CD4-positive, alpha-beta T cell (primary cell): ENCODE measurements at regions of chr20 and their contacts with region 1.

Region 1: DNA sequence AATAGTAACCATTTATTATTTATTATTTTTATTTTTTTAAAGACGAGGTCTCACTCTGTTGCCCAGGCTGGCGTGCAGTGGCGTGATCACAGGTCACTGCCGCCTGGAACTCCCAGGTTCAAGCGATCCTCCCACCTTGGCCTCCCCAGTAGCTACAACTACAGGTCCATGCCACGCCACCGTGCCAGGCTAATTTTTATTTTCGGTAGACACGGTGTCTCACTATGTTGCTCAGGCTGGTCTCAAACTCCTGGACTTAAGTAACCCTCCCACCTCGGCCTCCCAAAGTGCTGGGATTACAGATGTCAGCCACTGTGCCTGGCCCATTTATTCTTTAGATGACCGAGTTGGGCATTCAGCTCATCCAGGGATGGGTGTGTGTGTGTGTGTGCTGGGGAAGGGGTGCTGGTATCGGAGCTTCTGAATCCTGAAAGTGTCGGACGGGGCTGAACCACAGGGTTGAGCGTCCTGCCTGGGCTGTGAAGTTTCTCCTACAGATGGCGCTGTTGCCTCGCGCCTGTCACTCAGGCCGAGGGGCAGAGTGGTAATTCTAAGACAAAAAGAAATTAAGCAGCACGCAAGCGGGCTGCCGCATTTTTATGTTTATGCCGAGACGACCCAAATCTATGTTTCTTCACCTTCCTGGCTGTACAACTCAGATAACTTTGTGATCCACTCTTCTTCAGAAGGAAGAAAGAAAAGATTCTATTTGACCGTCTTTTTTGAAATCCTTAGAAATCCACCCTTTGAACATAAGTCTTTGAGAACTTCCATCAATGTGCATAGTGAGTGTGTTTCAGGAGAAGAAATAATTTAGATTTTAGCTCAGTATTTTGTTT is 252.8 kb downstream of the CDH26 start:
- DNase-seq: peak; percentile 20 to 74 (median 36)
- ATAC-seq: no peak
- H3K4me3 ChIP-seq: no peak overlapping the region
- H3K4me3 Mint-ChIP-seq: no peak overlapping the region
- H3K27ac ChIP-seq: no peak overlapping the region
- H3K27ac Mint-ChIP-seq: no peak overlapping the region
- H3K4me1 ChIP-seq: peaks cover 4% of the 10 kb centered on the region
- H3K4me1 Mint-ChIP-seq: peaks cover 5% of the 10 kb centered on the region
- H3K27me3 ChIP-seq: no peaks in the 10 kb centered on the region
- H3K27me3 Mint-ChIP-seq: no peaks in the 10 kb centered on the region
- CTCF ChIP-seq: peak; percentile 70

Region 2: DNA sequence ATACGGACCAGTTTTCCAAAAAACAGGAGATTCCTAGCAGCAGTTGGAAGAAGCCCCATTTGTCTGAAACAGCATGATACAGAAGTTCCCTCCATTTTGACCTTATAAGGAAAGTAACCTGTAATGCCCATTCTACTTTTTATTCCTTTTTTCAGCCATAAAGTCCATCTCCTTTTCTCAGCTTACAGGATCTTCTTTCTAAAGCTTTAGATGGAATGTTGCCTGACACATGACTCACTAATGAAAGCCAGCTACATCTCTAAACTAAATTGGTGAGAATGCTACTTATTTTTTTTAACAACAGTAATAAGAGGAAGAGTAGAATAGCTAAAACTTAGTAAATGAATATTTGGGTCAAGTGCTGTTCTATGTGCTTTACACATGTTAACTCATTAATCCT is 18.7 kb before region 1 on chr20:
- CTCF ChIA-PET with region 1: no interaction called
- POLR2A ChIA-PET with region 1: no interaction called
- intact Hi-C with region 1: no loop called
- DNase-seq: no peak
- ATAC-seq: no peak
- H3K4me3 ChIP-seq: no peak overlapping the region
- H3K4me3 Mint-ChIP-seq: no peak overlapping the region
- H3K27ac ChIP-seq: no peak overlapping the region
- H3K27ac Mint-ChIP-seq: no peak overlapping the region
- H3K4me1 ChIP-seq: no peaks in the 10 kb centered on the region
- H3K4me1 Mint-ChIP-seq: no peaks in the 10 kb centered on the region
- H3K27me3 ChIP-seq: no peaks in the 10 kb centered on the region
- H3K27me3 Mint-ChIP-seq: no peaks in the 10 kb centered on the region
- CTCF ChIP-seq: no peak

Region 3: GRCh38 chr20:60262967-60263603 is 52.1 kb after region 1 on chr20:
- CTCF ChIA-PET with region 1: interaction called, 4 read pairs
- POLR2A ChIA-PET with region 1: no interaction called
- intact Hi-C with region 1: loop called in 1 of 2 experiments (anchors 2 kb)
- DNase-seq: peak; percentile 22 to 74 (median 42)
- ATAC-seq: peak; percentile 52
- H3K4me3 ChIP-seq: no peak overlapping the region
- H3K4me3 Mint-ChIP-seq: no peak overlapping the region
- H3K27ac ChIP-seq: no peak overlapping the region
- H3K27ac Mint-ChIP-seq: no peak overlapping the region
- H3K4me1 ChIP-seq: peaks cover 8% of the 10 kb centered on the region
- H3K4me1 Mint-ChIP-seq: peaks cover 29% of the 10 kb centered on the region
- H3K27me3 ChIP-seq: no peaks in the 10 kb centered on the region
- H3K27me3 Mint-ChIP-seq: no peaks in the 10 kb centered on the region
- CTCF ChIP-seq: peak; percentile 77

Region 4: DNA sequence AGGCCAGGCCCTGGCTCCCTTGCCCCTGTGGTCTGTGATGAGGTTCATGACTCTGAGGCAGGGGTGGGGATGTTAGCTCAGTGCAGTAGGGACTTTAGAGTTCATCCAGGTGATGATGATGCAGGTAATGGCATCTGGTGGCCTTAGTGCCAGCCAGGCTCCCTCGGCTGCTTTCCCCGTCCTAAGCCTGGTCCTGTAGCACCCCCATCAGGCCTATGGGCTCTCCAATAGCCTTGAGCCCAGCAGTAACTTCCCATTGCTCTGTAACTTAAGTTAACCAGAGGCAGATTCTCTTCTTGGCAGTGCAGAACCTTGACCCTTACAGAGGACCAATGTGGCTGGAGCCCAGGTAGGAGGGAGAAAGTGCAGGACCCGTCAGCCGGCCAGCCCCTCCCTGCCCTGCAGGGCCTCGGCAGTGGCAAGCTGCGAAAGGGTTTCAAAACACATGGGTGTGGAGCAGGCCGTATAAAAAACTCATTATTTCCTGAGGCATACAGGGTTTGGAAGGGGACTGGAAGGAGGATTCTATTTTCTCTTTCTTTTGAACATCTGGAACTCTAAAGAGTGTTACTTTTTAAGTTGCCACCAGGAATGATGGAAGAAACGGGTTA is 154.2 kb after region 1 on chr20:
- CTCF ChIA-PET with region 1: no interaction called
- POLR2A ChIA-PET with region 1: interaction called, 3 read pairs
- intact Hi-C with region 1: loop called in 1 of 2 experiments (anchors 10 kb)
- DNase-seq: peak in 1 of 14 experiments; percentile 5
- ATAC-seq: no peak
- H3K4me3 ChIP-seq: no peak overlapping the region
- H3K4me3 Mint-ChIP-seq: no peak overlapping the region
- H3K27ac ChIP-seq: no peak overlapping the region
- H3K27ac Mint-ChIP-seq: no peak overlapping the region
- H3K4me1 ChIP-seq: no peaks in the 10 kb centered on the region
- H3K4me1 Mint-ChIP-seq: no peaks in the 10 kb centered on the region
- H3K27me3 ChIP-seq: no peaks in the 10 kb centered on the region
- H3K27me3 Mint-ChIP-seq: no peaks in the 10 kb centered on the region
- CTCF ChIP-seq: no peak

Region 5: DNA sequence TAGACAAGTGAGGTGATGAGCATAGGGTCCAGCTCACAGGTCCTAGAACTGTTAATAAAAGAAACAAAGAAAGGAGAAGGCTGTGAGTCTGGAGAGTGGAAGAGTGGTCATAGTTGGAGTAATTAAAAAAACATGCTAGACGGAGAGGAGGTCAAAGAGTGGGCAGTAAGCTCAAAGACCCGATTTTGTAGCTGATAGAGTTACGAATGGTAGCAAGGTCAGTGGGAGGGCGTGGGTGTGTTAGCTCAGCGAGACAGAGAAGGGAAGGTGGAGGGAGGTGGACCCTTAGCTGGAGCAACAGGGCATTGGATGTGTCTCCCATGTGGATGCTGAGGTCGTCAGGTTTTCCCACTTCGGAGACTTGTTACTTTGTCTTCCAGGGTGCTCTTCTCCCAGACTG is 178.9 kb after region 1 on chr20:
- CTCF ChIA-PET with region 1: no interaction called
- POLR2A ChIA-PET with region 1: no interaction called
- intact Hi-C with region 1: no loop called
- DNase-seq: no peak
- ATAC-seq: no peak
- H3K4me3 ChIP-seq: no peak overlapping the region
- H3K4me3 Mint-ChIP-seq: no peak overlapping the region
- H3K27ac ChIP-seq: no peak overlapping the region
- H3K27ac Mint-ChIP-seq: no peak overlapping the region
- H3K4me1 ChIP-seq: no peaks in the 10 kb centered on the region
- H3K4me1 Mint-ChIP-seq: no peaks in the 10 kb centered on the region
- H3K27me3 ChIP-seq: peaks cover 0 to 3% of the 10 kb centered on the region in 2 experiments
- H3K27me3 Mint-ChIP-seq: no peaks in the 10 kb centered on the region
- CTCF ChIP-seq: no peak

Region 6: GRCh38 chr20:61120595-61121515 is 909.9 kb after region 1 on chr20:
- CTCF ChIA-PET with region 1: no interaction called
- POLR2A ChIA-PET with region 1: no interaction called
- intact Hi-C with region 1: loop called in 1 of 2 experiments (anchors 5 kb)
- DNase-seq: peak in 6 of 14 experiments; percentile 6 to 58 (median 30)
- ATAC-seq: peak; percentile 56
- H3K4me3 ChIP-seq: no peak overlapping the region
- H3K4me3 Mint-ChIP-seq: no peak overlapping the region
- H3K27ac ChIP-seq: no peak overlapping the region
- H3K27ac Mint-ChIP-seq: no peak overlapping the region
- H3K4me1 ChIP-seq: no peaks in the 10 kb centered on the region
- H3K4me1 Mint-ChIP-seq: no peaks in the 10 kb centered on the region
- H3K27me3 ChIP-seq: peaks cover 0 to 2% of the 10 kb centered on the region in 2 experiments
- H3K27me3 Mint-ChIP-seq: peaks cover 5% of the 10 kb centered on the region
- CTCF ChIP-seq: peak; percentile 30

Region 7: GRCh38 chr20:61234803-61235113 is 1023.8 kb after region 1 on chr20:
- CTCF ChIA-PET with region 1: no interaction called
- POLR2A ChIA-PET with region 1: no interaction called
- intact Hi-C with region 1: loop called (anchors 2 kb)
- DNase-seq: no peak
- ATAC-seq: no peak
- H3K4me3 ChIP-seq: no peak overlapping the region
- H3K4me3 Mint-ChIP-seq: no peak overlapping the region
- H3K27ac ChIP-seq: no peak overlapping the region
- H3K27ac Mint-ChIP-seq: no peak overlapping the region
- H3K4me1 ChIP-seq: no peaks in the 10 kb centered on the region
- H3K4me1 Mint-ChIP-seq: no peaks in the 10 kb centered on the region
- H3K27me3 ChIP-seq: no peaks in the 10 kb centered on the region
- H3K27me3 Mint-ChIP-seq: peaks cover 11% of the 10 kb centered on the region
- CTCF ChIP-seq: no peak